ENCODE measurements at regions of chr6 and their contacts with region 1.

Region 1: DNA sequence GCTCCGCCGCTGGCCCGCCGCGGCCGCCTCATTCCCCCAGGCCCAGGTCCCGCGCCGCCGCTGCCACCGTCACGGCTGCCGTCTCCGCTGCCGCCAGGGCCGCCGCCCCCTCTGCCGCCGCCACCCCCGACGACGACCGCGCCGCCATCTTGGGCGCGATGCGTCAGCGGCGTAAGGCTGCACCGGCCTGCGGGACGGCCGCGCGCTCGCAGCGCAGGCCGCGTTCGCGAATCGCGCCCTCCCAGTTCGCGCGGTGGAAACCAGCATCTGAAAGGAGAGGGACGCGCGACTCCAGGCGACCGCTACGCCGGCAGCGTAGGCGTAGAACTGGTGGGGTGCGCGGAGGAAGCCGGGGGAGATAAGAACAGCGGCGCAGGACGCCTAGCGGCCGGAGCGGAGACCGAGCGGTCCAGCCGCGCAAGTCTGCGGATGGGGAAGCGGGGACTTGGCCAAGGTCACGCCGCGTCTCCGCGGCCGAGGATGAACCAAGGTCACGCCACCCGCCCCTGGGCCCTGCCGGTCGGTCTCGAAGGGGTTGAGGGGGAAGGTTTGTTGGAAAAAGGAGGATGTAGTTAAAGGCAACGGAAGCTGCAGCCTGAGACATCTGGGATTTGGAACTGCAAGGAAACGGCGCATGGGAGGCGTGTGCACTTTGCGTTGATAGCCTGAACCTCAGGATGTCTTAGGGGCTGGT is at the start of gene NUDT3:
- DNase-seq: peak; percentile 97
- total RNA-seq, gene NUDT3: 38.2 TPM

Region 2: DNA sequence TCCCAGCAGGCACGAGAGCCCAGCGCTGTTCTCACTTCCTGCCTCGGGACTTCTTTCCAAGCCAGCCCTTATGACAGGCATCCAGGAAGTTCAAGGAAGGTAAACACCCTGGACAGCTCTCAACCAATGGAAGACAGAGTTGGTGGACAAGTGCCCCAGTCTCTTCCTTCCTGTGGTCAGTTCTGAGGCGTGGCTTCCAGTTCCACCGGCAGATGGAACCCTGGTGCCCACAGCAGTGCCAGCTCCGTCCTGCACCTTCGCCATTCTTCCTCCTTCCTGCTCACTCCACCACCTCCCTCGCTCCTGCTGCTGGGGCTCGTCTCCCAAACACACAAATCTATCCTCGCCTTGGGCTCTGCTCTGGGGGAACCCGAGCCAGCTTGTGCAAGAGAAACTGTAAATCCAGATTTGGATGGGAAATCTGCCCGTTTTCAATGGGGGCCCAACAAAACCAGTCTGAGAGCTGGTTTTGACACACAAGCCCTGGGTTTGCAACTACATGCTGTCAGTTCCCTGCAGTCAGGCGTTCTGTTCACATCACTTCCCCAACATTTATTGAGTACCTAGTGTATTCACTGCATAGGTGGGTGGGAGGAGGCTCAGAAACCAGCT is 409.4 kb before region 1 on chr6:
- intact Hi-C with region 1: no loop called
- DNase-seq: peak; percentile 71

Region 3: GRCh38 chr6:34248727-34249551 is 143.7 kb before region 1 on chr6 and contains the start of gene SMIM29:
- intact Hi-C with region 1: loop called (anchors 1 kb)
- DNase-seq: peak; percentile 99
- total RNA-seq, gene SMIM29: 27.1 TPM

Region 4: GRCh38 chr6:34301408-34301807 is 91.2 kb before region 1 on chr6:
- intact Hi-C with region 1: loop called (anchors 5 kb)
- DNase-seq: peak; percentile 79

Region 5: GRCh38 chr6:34341481-34341971 is 51.1 kb before region 1 on chr6:
- intact Hi-C with region 1: loop called (anchors 5 kb)
- DNase-seq: no peak

Measured in cardiac septum (tissue), 1 donor.